ENCODE measurements at regions of chr2 and their contacts with region 1.

Region 1: GRCh38 chr2:64516628-64517510 is 7.3 kb upstream of the AFTPH start:
- DNase-seq: no peak
- ATAC-seq: peak; percentile 83 to 90 (median 88)
- H3K4me3 ChIP-seq: no peak overlapping the region
- H3K27ac ChIP-seq: no peak overlapping the region
- H3K4me1 ChIP-seq: peaks cover 0 to 13% (median 5%) of the 10 kb centered on the region in 4 donors
- H3K27me3 ChIP-seq: no peaks in the 10 kb centered on the region
- CTCF ChIP-seq: no peak
- POLR2A ChIP-seq: no peak

Region 2: DNA sequence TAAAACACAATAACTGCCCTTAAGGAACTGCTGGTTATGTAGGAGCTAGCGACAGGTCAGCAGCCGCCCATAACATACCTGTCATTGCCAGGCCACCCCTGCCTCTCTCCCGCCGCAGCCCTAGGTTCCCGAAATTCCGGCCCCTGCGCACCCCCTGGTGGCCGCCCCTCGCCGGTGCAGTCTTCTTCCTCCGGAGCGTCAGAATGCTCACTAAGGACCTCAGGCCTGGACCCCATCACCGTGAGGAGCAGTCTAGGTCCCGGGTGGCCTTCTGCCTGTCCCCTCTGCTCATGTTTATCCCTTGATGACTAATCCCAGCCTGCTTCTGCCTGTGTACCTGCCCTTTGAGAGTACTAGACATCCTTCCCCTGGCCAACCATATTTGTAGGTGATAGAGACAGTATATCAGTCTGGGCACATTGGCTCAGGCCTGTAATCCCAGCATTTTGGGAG is 356.6 kb after region 1 on chr2:
- intact Hi-C with region 1: loop called in 1 of 2 experiments (anchors 10 kb)
- DNase-seq: peak; percentile 82 to 85 (median 82)
- ATAC-seq: peak; percentile 96 to 99 (median 98)
- H3K4me3 ChIP-seq: no peak overlapping the region
- H3K27ac ChIP-seq: no peak overlapping the region
- H3K4me1 ChIP-seq: no peaks in the 10 kb centered on the region
- H3K27me3 ChIP-seq: no peaks in the 10 kb centered on the region
- CTCF ChIP-seq: peak; percentile 95 to 96 (median 95)
- POLR2A ChIP-seq: no peak

Measured in right lobe of liver (tissue), 6 donors.